ENCODE measurements at regions of chr12 and their contacts with region 1.

Region 1: DNA sequence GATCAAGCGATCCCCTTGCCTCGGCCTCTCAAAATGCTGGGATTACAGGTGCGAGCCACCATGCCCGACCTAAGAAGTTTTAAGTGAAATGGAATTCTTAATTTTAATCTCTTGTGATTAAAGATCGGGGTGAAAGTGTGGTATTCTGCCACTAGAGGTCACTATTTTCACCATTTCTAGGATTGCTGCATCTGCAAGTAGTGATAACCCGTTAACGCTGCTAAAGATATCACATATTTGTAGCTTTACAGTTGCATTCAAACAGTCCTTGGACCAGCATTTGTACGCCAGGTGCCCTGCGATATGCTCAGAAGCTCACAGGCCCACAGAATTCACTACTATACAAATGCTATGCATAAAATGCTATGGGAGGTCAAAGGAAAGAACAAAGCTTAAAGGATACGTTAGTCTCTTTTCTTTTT is 19.3 kb downstream of the CCDC62 start:
- DNase-seq: peak; percentile 75
- H3K4me3 ChIP-seq: no peak overlapping the region
- H3K27ac ChIP-seq: no peak overlapping the region
- H3K4me1 ChIP-seq: no peaks in the 10 kb centered on the region
- H3K27me3 ChIP-seq: no peaks in the 10 kb centered on the region
- CTCF ChIP-seq: peak; percentile 41 to 57
- POLR2A ChIP-seq: no peak

Region 2: DNA sequence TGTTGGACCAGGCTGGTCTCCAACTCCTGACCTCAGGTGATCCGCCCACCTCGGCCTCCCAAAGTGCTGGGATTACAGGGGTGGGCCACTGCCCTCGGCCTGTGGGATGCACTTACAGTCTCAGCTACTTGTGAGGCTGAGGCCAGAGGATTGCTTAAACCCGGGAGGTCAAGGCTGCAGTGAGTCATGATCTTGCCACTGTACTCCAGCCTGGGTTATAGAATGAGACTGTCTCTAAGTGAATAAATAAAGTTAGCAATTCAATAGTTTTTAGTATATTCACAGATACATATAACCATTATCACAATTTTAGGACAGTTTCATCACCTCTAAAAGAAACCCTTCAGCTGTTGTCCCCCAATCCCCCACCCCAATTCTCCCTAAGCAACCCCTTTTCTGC is 151.7 kb before region 1 on chr12:
- CTCF ChIA-PET with region 1: interaction called, 27 read pairs
- POLR2A ChIA-PET with region 1: no interaction called
- dilution Hi-C with region 1: no loop called
- intact Hi-C with region 1: no loop called
- DNase-seq: no peak
- H3K4me3 ChIP-seq: no peak overlapping the region
- H3K27ac ChIP-seq: no peak overlapping the region
- H3K4me1 ChIP-seq: no peaks in the 10 kb centered on the region
- H3K27me3 ChIP-seq: no peaks in the 10 kb centered on the region
- CTCF ChIP-seq: no peak
- POLR2A ChIP-seq: no peak

Region 3: GRCh38 chr12:122732170-122732569 is 61.5 kb before region 1 on chr12:
- CTCF ChIA-PET with region 1: no interaction called
- POLR2A ChIA-PET with region 1: no interaction called
- dilution Hi-C with region 1: no loop called
- intact Hi-C with region 1: no loop called
- DNase-seq: no peak
- H3K4me3 ChIP-seq: no peak overlapping the region
- H3K27ac ChIP-seq: no peak overlapping the region
- H3K4me1 ChIP-seq: no peaks in the 10 kb centered on the region
- H3K27me3 ChIP-seq: no peaks in the 10 kb centered on the region
- CTCF ChIP-seq: no peak
- POLR2A ChIP-seq: no peak

Region 4: GRCh38 chr12:122819209-122819785 is 25.6 kb after region 1 on chr12:
- CTCF ChIA-PET with region 1: interaction called, 18 read pairs
- POLR2A ChIA-PET with region 1: no interaction called
- dilution Hi-C with region 1: no loop called
- intact Hi-C with region 1: no loop called
- DNase-seq: no peak
- H3K4me3 ChIP-seq: no peak overlapping the region
- H3K27ac ChIP-seq: no peak overlapping the region
- H3K4me1 ChIP-seq: no peaks in the 10 kb centered on the region
- H3K27me3 ChIP-seq: peaks cover 0 to 1% of the 10 kb centered on the region in 2 experiments
- CTCF ChIP-seq: no peak
- POLR2A ChIP-seq: no peak

Region 5: GRCh38 chr12:122841544-122842321 is 48.0 kb after region 1 on chr12:
- CTCF ChIA-PET with region 1: interaction called, 14 read pairs
- POLR2A ChIA-PET with region 1: no interaction called
- dilution Hi-C with region 1: no loop called
- intact Hi-C with region 1: no loop called
- DNase-seq: no peak
- H3K4me3 ChIP-seq: no peak overlapping the region
- H3K27ac ChIP-seq: no peak overlapping the region
- H3K4me1 ChIP-seq: peaks cover 41% of the 10 kb centered on the region
- H3K27me3 ChIP-seq: no peaks in the 10 kb centered on the region
- CTCF ChIP-seq: no peak
- POLR2A ChIP-seq: no peak

Region 6: DNA sequence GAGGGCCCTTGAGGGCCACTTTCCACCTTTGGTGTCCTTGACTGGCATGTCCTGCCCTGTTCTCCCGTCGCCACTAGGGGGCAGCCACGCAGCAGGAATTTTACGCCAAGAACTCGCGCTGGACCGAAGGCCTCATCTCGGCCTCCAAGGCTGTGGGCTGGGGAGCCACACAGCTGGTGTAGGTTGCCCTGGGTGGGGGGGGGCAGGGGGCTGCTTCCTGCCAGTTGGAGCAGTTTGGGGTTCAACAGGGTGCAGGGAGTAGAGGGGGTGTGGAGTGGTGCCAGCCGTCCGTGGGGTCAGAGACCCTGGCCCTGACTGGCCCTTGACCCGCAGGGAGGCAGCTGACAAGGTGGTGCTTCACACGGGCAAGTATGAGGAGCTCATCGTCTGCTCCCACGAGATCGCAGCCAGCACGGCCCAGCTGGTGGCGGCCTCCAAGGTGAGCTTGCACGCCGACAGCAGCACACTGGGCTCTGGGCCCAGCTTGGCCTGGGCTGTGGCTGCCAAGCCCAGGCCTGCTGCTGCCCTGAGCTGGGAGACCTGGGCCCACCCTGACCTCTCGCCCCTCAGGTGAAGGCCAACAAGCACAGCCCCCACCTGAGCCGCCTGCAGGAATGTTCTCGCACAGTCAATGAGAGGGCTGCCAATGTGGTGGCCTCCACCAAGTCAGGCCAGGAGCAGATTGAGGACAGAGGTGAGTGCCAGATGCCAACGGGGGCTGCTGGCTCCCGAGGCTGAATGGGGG is 66.8 kb after region 1 on chr12:
- CTCF ChIA-PET with region 1: interaction called, 36 read pairs
- POLR2A ChIA-PET with region 1: no interaction called
- dilution Hi-C with region 1: no loop called
- intact Hi-C with region 1: loop called (anchors 1 kb)
- DNase-seq: peak; percentile 63
- H3K4me3 ChIP-seq: no peak overlapping the region
- H3K27ac ChIP-seq: no peak overlapping the region
- H3K4me1 ChIP-seq: no peaks in the 10 kb centered on the region
- H3K27me3 ChIP-seq: no peaks in the 10 kb centered on the region
- CTCF ChIP-seq: peak; percentile 80 to 88
- POLR2A ChIP-seq: no peak

Region 7: DNA sequence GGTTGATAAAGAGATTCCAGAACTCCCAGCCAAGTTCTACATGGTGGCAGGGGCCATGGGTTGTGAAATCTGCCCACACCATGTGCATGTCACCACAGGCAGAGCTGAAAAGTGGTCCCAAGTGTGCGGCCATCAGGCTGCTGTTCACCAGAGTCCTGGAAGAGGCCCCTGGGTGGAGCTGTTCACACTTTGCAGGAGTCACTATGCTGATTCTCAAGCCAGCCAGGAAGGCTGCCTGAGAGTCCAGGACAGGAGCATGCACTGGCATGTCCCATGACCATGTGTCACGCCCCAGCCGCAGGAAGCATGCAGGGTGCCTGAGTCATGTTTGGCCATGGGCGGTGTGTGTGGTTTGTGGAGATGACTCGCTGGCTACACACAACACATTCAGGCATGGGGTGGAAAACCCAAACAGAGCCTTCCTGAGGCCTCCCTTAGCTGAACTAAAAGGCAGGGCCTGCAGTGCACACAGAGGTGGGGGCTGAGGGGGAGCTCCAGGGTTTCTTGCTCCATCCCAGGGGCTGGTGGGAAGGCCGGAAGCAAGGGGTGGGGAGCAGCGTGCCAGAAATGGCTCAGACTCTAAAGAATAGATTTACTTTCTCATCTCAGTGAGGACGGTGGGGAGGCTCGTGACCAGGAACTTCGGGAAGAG is 153.1 kb after region 1 on chr12:
- CTCF ChIA-PET with region 1: interaction called, 32 read pairs
- POLR2A ChIA-PET with region 1: no interaction called
- dilution Hi-C with region 1: no loop called
- intact Hi-C with region 1: loop called (anchors 1 kb)
- DNase-seq: peak; percentile 96
- H3K4me3 ChIP-seq: no peak overlapping the region
- H3K27ac ChIP-seq: peak overlapping the region; percentile 85
- H3K4me1 ChIP-seq: peaks cover 53% of the 10 kb centered on the region
- H3K27me3 ChIP-seq: no peaks in the 10 kb centered on the region
- CTCF ChIP-seq: peak; percentile 26 to 38
- POLR2A ChIP-seq: peak; percentile 41

Measured in endothelial cell of umbilical vein (primary cell).